ENCODE measurements at regions of chr20 and their contacts with region 1.

Region 1: DNA sequence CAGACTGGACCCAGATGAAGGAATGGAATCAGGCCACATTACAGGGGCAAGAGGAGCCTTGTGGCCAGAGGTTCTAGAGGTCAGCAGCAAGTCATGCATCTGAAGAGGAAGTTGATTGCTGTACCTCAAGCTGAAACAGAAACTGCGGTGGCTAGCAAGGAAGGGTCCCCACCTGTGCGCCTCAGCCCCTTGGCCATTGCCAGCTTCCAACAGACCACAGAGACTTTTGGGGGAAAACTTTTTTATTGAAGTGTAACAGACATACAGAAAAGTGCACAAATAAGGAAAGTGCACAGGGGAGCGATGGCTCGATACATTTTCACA is 26.8 kb upstream of the SLC9A8 start:
- DNase-seq: no peak
- H3K4me3 ChIP-seq: no peak overlapping the region
- H3K27ac ChIP-seq: no peak overlapping the region
- H3K4me1 ChIP-seq: no peaks in the 10 kb centered on the region; a peak in 1 of 7 replicates
- H3K27me3 ChIP-seq: no peaks in the 10 kb centered on the region
- CTCF ChIP-seq: no peak
- EP300 ChIP-seq: no peak
- POLR2A ChIP-seq: no peak
- RAD21 ChIP-seq: no peak

Region 2: DNA sequence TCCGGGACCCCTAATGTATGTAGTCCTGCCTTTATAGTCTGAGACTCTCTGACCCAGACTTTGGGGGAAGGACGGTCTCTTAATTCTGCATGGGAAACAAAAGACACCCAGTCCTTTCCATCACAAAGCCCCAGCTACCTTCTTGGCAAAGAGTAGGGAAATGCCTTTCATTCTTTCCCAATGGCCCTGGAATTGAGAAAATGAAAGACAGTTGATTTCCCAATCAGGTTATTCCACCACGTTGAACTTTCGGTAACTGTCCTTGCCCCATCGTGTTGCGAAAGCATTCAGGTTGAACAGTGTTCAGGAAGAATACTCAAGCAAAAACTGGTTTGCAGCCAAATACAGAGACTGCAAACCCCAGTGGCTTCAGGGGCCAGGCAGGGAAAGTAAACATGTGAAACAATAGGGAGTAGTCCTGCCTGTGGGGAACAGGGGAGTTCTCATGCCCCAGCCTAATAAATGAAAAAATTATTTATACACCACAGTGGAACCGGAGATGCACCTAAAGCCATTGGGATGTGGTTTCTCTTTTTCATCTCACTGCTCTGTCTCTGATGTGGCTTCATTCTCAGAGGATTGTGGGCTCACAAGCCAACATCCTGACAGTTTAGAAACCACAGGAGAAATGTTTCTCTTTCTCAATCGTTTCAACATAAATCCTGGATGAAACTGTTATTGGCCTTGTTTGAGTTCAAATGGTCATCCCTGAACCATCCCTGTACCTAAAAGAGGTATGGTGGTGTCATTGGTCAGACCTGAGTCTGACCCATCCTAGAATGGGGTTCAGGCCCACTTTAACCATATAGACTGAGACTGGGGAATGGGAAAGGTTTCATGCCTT is 17.4 kb before region 1 on chr20:
- CTCF ChIA-PET with region 1: interaction called, 16 read pairs
- POLR2A ChIA-PET with region 1: no interaction called
- DNase-seq: peak; percentile 57 to 59
- H3K4me3 ChIP-seq: peak overlapping the region in 1 of 4 experiments; percentile 29; a peak in 1 of 8 replicates
- H3K27ac ChIP-seq: peak overlapping the region; percentile 79
- H3K4me1 ChIP-seq: peaks cover 7 to 23% (median 14%) of the 10 kb centered on the region in 4 experiments
- H3K27me3 ChIP-seq: no peaks in the 10 kb centered on the region
- CTCF ChIP-seq: no peak
- EP300 ChIP-seq: no peak
- POLR2A ChIP-seq: no peak
- RAD21 ChIP-seq: no peak; a peak in 1 of 4 replicates

Region 3: GRCh38 chr20:49775229-49775693 is 10.6 kb before region 1 on chr20:
- CTCF ChIA-PET with region 1: interaction called, 16 read pairs
- POLR2A ChIA-PET with region 1: interaction called, 3 read pairs
- DNase-seq: peak; percentile 44 to 52
- H3K4me3 ChIP-seq: no peak overlapping the region
- H3K27ac ChIP-seq: no peak overlapping the region
- H3K4me1 ChIP-seq: peaks cover 5 to 9% (median 6%) of the 10 kb centered on the region in 4 experiments; a peak in 4 of 7 replicates
- H3K27me3 ChIP-seq: no peaks in the 10 kb centered on the region
- CTCF ChIP-seq: no peak
- EP300 ChIP-seq: no peak
- POLR2A ChIP-seq: no peak
- RAD21 ChIP-seq: peak in 1 of 2 experiments; percentile 7; a peak in 1 of 4 replicates